ENCODE measurements at regions of chr21 and their contacts with region 1.

Region 1: DNA sequence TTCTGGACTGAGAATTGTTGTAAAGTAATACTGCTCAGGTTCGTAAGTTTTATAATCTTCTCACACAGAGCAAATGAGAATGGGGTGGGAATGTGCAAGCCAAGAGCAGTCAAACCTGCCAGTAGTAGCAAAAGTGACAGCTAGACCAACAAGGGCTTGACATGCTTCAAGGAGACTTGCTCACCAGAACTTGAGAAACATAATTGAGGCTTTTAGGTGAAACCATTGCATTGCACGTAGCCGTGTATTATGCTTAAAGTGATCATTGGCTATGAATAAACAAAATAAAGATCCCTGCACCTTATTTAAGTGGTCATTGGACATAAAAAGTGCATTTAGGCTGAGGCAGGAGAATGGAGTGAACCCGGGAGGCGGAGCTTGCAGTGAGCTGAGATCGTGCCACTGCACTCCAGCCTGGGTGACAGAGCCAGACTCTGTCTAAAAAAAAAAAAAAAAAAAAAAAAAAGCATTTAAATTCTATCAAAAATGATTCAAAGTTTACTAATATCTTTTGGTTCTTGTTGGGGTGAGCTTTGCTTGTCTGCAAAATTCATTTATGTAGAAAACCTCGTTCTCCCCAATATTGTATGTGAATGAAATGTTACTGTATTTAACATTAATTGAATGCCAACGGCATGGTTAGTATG is 11.8 kb upstream of the CCT8 start:
- DNase-seq: no peak
- ATAC-seq: no peak
- H3K4me3 ChIP-seq: no peak overlapping the region
- H3K27ac ChIP-seq: peak overlapping the region in 2 of 10 donors; percentile 19 to 31
- H3K4me1 ChIP-seq: peaks cover 0 to 34% (median 24%) of the 10 kb centered on the region in 9 donors
- H3K27me3 ChIP-seq: no peaks in the 10 kb centered on the region
- CTCF ChIP-seq: no peak

Region 2: GRCh38 chr21:29155118-29155932 is 70.1 kb after region 1 on chr21:
- intact Hi-C with region 1: loop called in 7 of 10 experiments (anchors 5 to 10 kb)
- DNase-seq: peak; percentile 67 to 74
- ATAC-seq: peak; percentile 83 to 96 (median 94)
- H3K4me3 ChIP-seq: peak overlapping the region in 7 of 10 donors; percentile 28 to 47 (median 41)
- H3K27ac ChIP-seq: peak overlapping the region in 9 of 10 donors; percentile 28 to 81 (median 61)
- H3K4me1 ChIP-seq: peaks cover 0 to 38% (median 19%) of the 10 kb centered on the region in 9 donors
- H3K27me3 ChIP-seq: no peaks in the 10 kb centered on the region
- CTCF ChIP-seq: peak in 2 of 9 donors; percentile 9 to 22

Measured in heart right ventricle (tissue), 16 donors.